Aorta (tissue), 5 donors: ENCODE measurements at regions of chr5 and their contacts with region 1.

Region 1: DNA sequence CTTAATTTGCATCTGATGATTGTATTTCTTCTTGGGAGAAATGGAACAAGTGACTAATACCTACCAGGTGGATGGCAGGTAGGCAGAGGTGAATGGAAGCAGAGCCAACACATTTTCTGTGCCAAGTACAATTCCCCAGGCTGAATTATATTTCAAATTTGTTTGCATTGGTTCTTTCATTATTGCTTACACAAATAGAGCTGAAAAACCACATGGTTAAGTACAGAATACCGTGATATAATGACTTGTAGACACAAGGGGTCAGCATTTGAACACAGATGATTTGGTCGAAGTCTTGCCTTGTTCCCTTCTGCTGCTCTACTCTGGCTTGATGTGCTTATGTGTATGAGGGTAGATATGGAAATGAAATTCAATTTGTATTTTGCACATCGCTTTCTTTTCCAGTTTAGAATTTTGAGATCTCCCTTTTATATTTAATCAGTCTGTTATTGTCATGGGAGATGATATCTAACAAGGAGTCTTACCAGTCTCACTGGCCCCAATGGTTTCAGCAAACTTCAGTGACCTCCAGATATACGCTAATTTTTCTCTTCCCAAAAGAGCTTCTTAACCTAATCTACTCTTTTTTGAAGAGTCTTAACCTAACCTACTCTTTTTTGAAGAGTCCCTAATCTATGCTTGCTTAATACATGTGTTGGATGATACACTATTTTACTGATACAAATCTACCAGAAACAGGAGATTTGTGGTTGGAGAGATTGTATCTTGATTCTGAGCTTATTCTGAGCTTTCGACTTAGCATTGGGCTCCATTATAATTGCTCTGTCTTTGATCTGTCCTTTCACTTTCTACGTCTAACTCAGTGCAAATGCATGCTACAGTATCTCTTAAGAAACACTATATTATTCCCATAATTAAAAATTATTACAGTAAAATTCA is 88.1 kb downstream of the PCSK1 start:
- DNase-seq: no peak
- ATAC-seq: peak; percentile 90
- H3K4me3 ChIP-seq: no peak overlapping the region
- H3K27ac ChIP-seq: no peak overlapping the region
- H3K4me1 ChIP-seq: no peaks in the 10 kb centered on the region
- H3K27me3 ChIP-seq: no peaks in the 10 kb centered on the region

Region 2: DNA sequence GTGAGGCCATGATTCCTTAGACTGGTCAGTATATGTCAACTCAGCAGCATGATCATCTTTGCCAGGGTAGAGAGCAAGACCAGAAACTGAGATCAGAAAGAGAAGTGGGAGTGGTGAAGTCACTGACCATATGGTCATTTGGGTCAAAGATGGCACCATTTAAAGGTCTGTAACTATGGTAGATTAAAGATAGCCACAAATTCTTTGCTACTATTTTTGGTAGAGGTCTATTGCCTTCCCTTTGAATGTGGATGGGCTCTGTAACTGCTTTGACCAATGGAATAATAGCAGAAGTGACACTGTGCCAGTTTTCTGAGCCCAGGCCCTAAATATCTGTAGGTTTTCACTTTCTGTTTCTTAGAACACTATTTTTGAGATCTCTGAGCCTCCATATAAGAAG is 29.5 kb before region 1 on chr5:
- intact Hi-C with region 1: no loop called
- DNase-seq: no peak
- ATAC-seq: no peak
- H3K4me3 ChIP-seq: no peak overlapping the region
- H3K27ac ChIP-seq: no peak overlapping the region
- H3K4me1 ChIP-seq: peaks cover 0 to 4% of the 10 kb centered on the region in 2 donors
- H3K27me3 ChIP-seq: no peaks in the 10 kb centered on the region

Region 3: GRCh38 chr5:96601811-96602244 is 256.9 kb after region 1 on chr5:
- intact Hi-C with region 1: loop called (anchors 1 to 2 kb)
- DNase-seq: no peak
- ATAC-seq: peak; percentile 83
- H3K4me3 ChIP-seq: no peak overlapping the region
- H3K27ac ChIP-seq: no peak overlapping the region
- H3K4me1 ChIP-seq: no peaks in the 10 kb centered on the region
- H3K27me3 ChIP-seq: no peaks in the 10 kb centered on the region

Region 4: GRCh38 chr5:96702503-96703383 is 357.8 kb after region 1 on chr5:
- intact Hi-C with region 1: loop called in 1 of 2 experiments (anchors 10 kb)
- DNase-seq: peak; percentile 97 to 99
- ATAC-seq: peak; percentile 99
- H3K4me3 ChIP-seq: peak overlapping the region; percentile 24 to 43
- H3K27ac ChIP-seq: peak overlapping the region; percentile 12 to 86
- H3K4me1 ChIP-seq: peaks cover 0 to 3% of the 10 kb centered on the region in 2 donors
- H3K27me3 ChIP-seq: no peaks in the 10 kb centered on the region

Region 5: GRCh38 chr5:96885518-96886338 is 540.8 kb after region 1 on chr5:
- intact Hi-C with region 1: no loop called
- DNase-seq: no peak
- ATAC-seq: no peak
- H3K4me3 ChIP-seq: no peak overlapping the region
- H3K27ac ChIP-seq: no peak overlapping the region
- H3K4me1 ChIP-seq: no peaks in the 10 kb centered on the region
- H3K27me3 ChIP-seq: no peaks in the 10 kb centered on the region